ENCODE measurements at regions of chr2 and their contacts with region 1.

Region 1: DNA sequence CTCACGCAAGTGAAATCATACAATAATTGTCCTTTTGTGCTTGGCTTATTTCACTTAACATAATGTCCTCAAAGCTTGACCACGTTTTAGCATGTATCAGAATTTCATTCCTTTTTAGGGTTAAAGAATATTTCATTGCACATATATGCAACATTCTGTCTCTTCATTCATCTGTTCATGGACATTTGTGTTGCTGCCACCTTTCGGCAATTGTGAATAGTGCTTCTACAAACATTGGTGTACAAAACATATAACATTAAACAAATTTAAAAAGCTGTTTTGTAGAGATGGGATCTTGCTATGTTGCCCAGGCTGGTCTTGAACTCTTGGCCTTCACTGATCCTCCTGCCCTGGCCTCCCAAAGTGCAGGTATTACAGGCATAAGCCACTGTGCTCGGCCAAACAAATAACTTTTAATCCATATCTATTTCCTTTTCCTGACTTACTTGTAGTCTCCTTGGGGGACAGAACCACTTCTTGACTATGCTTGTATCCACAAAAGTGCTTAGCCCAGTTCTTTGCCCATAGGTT is 209.3 kb downstream of the SLC4A3 start:
- DNase-seq: peak; percentile 31
- H3K4me3 ChIP-seq: no peak overlapping the region
- H3K27ac ChIP-seq: no peak overlapping the region
- H3K4me1 ChIP-seq: no peaks in the 10 kb centered on the region
- H3K27me3 ChIP-seq: no peaks in the 10 kb centered on the region
- CTCF ChIP-seq: peak; percentile 26 to 40

Region 2: DNA sequence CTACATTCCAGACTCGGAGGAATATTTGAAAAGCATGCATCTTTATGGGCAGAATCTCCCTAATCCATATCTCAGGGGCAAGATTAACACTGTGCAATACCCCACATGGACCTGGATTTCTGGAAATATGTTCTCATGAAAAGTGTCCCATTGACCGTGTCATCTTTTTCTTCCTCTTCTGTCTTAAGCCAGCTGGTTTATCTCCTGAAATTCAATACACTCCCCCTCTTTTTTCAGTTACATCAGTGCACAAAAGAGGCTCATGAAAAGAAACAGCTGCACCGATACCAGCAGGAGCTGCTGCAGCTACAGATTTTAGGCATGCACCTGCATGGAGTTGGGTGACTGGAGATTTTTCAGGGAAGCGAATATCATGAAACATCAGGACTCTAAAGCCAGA is 92.1 kb before region 1 on chr2:
- CTCF ChIA-PET with region 1: no interaction called
- dilution Hi-C with region 1: no loop called
- in situ Hi-C with region 1: loop called in 1 of 2 experiments (anchors 10 kb)
- intact Hi-C with region 1: no loop called
- DNase-seq: no peak
- H3K4me3 ChIP-seq: no peak overlapping the region
- H3K27ac ChIP-seq: no peak overlapping the region
- H3K4me1 ChIP-seq: no peaks in the 10 kb centered on the region
- H3K27me3 ChIP-seq: no peaks in the 10 kb centered on the region
- CTCF ChIP-seq: no peak

Region 3: GRCh38 chr2:219870041-219870440 is 33.3 kb after region 1 on chr2:
- CTCF ChIA-PET with region 1: interaction called, 3 read pairs
- dilution Hi-C with region 1: loop called (anchors 5 kb)
- in situ Hi-C with region 1: no loop called
- intact Hi-C with region 1: no loop called
- DNase-seq: peak; percentile 27
- H3K4me3 ChIP-seq: no peak overlapping the region
- H3K27ac ChIP-seq: no peak overlapping the region
- H3K4me1 ChIP-seq: no peaks in the 10 kb centered on the region
- H3K27me3 ChIP-seq: no peaks in the 10 kb centered on the region
- CTCF ChIP-seq: no peak